PC-9 (cell line): ENCODE measurements at regions of chr6 and their contacts with region 1.

Region 1: DNA sequence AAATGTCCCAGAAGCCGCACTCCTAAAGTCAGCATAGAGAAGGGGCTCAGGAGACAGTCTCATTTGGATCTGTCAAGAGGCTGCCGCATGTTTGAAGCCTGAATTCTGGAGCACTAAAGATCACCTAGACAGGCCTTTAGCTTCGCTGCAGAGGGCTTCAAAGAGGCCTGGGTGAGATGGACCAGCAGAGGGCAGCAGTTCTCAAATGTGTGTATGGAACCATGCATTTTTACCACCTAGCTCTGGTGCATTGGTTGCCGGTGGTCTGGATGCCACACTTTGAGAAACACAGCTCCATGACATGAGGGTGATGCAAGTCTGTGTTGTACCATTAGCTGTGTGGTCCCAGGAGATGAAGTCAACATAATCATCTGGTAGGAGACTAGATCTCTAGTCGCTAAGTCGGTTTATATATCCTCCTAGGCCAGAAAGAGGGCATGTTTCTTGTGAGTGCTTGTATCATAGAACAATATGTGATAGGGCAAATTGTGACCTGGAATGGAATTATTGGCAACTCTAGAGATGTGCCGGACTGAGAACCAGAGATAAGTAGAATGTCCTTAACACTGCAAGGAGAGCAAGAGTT is 64.8 kb downstream of the KIAA0319 start:
- DNase-seq: peak in 1 of 2 experiments; percentile 60
- H3K4me3 ChIP-seq: no peak overlapping the region
- H3K27ac ChIP-seq: no peak overlapping the region
- H3K4me1 ChIP-seq: peaks cover 26% of the 10 kb centered on the region
- H3K27me3 ChIP-seq: no peaks in the 10 kb centered on the region
- CTCF ChIP-seq: peak; percentile 88

Region 2: DNA sequence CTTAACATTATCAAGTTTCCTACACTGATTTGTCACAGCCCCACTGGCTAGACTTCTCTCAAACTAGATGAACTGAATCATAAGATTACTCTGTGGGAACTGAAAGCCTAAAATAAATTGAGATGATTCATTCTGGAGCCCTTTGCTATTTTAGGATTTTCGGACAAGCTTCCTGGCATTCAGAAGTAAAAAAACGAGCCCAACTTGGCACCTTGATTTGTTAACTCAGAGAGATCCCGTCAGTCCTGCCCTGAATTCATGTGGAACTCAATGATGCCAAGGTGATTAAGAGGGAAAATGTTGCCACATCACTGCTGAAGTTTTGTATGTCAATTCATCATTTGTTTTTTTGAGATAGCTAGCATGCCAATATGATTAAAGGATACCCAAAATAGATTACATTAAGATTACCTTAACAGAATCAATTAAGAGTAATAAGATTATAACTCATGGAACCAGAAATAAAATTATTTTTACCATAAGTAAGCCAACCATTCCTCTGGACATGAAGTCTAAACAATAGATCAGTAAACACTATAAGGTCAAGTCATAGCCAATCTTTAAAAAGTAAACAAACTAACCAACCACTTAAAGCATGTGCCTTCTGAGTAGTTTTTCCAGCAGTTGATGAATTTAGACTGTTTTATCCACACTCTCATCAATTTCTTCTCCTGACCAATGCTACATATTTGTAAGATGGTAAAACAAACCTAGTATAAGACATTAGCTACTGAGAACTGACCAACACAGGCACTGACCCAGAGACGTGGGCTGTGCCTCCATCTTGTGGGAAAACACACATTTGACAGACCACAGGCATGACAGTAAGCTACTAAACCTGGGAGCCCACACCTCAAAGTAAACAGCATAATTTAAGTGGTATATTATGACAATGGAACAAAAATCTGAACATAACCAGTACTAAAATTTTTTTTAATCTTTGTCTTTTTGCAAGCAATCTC is 576.8 kb before region 1 on chr6:
- CTCF ChIA-PET with region 1: no interaction called
- POLR2A ChIA-PET with region 1: no interaction called
- intact Hi-C with region 1: no loop called
- DNase-seq: no peak
- H3K4me3 ChIP-seq: no peak overlapping the region
- H3K27ac ChIP-seq: no peak overlapping the region
- H3K4me1 ChIP-seq: no peaks in the 10 kb centered on the region
- H3K27me3 ChIP-seq: no peaks in the 10 kb centered on the region
- CTCF ChIP-seq: no peak

Region 3: GRCh38 chr6:24431045-24431451 is 150.1 kb before region 1 on chr6:
- CTCF ChIA-PET with region 1: no interaction called
- POLR2A ChIA-PET with region 1: no interaction called
- intact Hi-C with region 1: loop called (anchors 10 kb)
- DNase-seq: peak in 1 of 2 experiments; percentile 32
- H3K4me3 ChIP-seq: no peak overlapping the region
- H3K27ac ChIP-seq: no peak overlapping the region
- H3K4me1 ChIP-seq: peaks cover 20% of the 10 kb centered on the region
- H3K27me3 ChIP-seq: no peaks in the 10 kb centered on the region
- CTCF ChIP-seq: peak; percentile 88

Region 4: GRCh38 chr6:24506814-24507520 is 74.2 kb before region 1 on chr6:
- CTCF ChIA-PET with region 1: no interaction called
- POLR2A ChIA-PET with region 1: no interaction called
- intact Hi-C with region 1: no loop called
- DNase-seq: no peak
- H3K4me3 ChIP-seq: no peak overlapping the region
- H3K27ac ChIP-seq: no peak overlapping the region
- H3K4me1 ChIP-seq: peaks cover 28% of the 10 kb centered on the region
- H3K27me3 ChIP-seq: no peaks in the 10 kb centered on the region
- CTCF ChIP-seq: no peak

Region 5: GRCh38 chr6:24666641-24667377 is 85.6 kb after region 1 on chr6 and contains the starts of genes ACOT13 and TDP2:
- CTCF ChIA-PET with region 1: interaction called, 3 read pairs
- POLR2A ChIA-PET with region 1: interaction called, 5 read pairs
- intact Hi-C with region 1: loop called (anchors 1 kb)
- DNase-seq: peak; percentile 87 to 97
- H3K4me3 ChIP-seq: peak within 1 kb of the TSS; percentile 98
- H3K27ac ChIP-seq: peak within 1 kb of the TSS; percentile 97
- H3K4me1 ChIP-seq: peaks cover 39% of the 10 kb centered on the region
- H3K27me3 ChIP-seq: no peaks in the 10 kb centered on the region
- CTCF ChIP-seq: peak; percentile 55; the same call in 1 of the 2 replicates
- total RNA-seq, gene ACOT13: 70.9 and 79.2 TPM in 2 replicates
- total RNA-seq, gene TDP2: 83.0 and 95.8 TPM in 2 replicates

Region 6: DNA sequence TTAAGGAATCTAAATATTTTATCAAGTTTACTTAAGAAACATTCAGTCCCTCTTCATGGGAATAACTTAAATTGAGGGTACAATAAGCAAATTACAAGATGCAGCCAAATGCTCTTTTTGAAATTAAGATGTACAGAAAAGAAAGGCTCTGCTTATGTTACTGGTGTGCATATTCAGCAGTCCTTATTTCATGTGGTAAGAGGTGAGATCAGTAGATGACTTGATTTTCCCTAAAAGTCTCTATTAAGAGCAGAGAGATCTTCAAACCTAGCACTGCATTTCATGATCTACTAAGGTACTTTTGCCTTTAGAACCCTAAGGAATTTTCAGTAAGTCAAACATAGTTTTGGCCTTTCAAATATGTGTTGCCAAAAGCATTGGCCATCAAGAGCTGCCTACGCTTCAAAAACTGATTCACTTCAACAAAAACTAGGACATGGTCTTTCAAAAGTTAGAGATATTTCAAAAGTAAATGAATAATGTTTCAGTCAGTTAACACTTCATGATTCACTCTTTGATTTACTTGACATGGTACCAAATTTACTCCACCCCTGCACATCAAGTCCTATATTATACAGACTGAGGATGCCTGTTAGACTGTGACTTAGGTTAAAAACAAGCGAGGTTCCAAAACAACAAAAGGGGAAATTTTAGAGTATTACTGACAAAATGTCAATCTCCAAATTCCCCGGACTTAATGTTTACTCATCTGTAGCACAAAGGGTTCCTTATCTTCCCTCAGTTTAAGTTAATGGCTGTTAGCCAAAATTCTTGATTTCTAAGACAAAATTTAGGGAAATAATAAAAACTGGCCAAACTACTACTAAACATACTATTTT is 118.6 kb after region 1 on chr6:
- CTCF ChIA-PET with region 1: interaction called, 15 read pairs
- POLR2A ChIA-PET with region 1: interaction called, 8 read pairs
- intact Hi-C with region 1: loop called (anchors 1 kb)
- DNase-seq: no peak
- H3K4me3 ChIP-seq: no peak overlapping the region
- H3K27ac ChIP-seq: no peak overlapping the region
- H3K4me1 ChIP-seq: no peaks in the 10 kb centered on the region
- H3K27me3 ChIP-seq: no peaks in the 10 kb centered on the region
- CTCF ChIP-seq: no peak

Region 7: GRCh38 chr6:24720604-24721460 is 139.7 kb after region 1 on chr6:
- CTCF ChIA-PET with region 1: no interaction called
- POLR2A ChIA-PET with region 1: interaction called, 19 read pairs
- intact Hi-C with region 1: no loop called
- DNase-seq: peak; percentile 99 to 100
- H3K4me3 ChIP-seq: peak overlapping the region; percentile 95
- H3K27ac ChIP-seq: peak overlapping the region; percentile 93
- H3K4me1 ChIP-seq: peaks cover 42% of the 10 kb centered on the region
- H3K27me3 ChIP-seq: no peaks in the 10 kb centered on the region
- CTCF ChIP-seq: no peak